Activated CD8-positive, alpha-beta T cell treated with anti-CD3 and anti-CD28 coated beads for 36 hours (primary cell): ENCODE measurements at regions of chr5 and their contacts with region 1.

Region 1: GRCh38 chr5:170183816-170184687 is 48.7 kb upstream of the C5orf58 start:
- DNase-seq: peak; percentile 66
- ATAC-seq: peak; percentile 72
- H3K4me3 Mint-ChIP-seq: no peak overlapping the region
- H3K27ac Mint-ChIP-seq: no peak overlapping the region
- H3K4me1 Mint-ChIP-seq: no peaks in the 10 kb centered on the region
- H3K27me3 Mint-ChIP-seq: no peaks in the 10 kb centered on the region
- CTCF ChIP-seq: peak; percentile 92

Region 2: DNA sequence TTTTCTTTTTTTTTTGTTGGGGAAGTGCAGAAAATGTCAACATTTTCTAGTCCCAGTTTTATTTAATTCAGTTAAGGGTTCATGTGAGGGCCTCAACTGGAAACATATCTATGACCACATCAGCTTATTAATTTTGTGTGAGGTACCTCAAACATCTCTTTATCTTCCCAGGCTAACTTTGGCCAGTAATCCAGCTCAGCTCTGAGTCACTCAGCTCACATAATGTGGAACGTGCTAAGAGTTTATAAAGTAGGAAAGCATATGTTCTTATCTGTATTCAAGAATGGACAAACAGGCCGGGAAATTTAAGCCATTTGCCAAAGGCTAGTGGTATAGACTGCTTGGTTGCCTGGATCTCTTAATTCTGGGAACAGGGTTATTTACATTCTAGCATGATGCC is 322.1 kb before region 1 on chr5:
- CTCF ChIA-PET with region 1: no interaction called
- POLR2A ChIA-PET with region 1: no interaction called
- intact Hi-C with region 1: no loop called
- DNase-seq: no peak
- ATAC-seq: no peak
- H3K4me3 Mint-ChIP-seq: no peak overlapping the region
- H3K27ac Mint-ChIP-seq: no peak overlapping the region
- H3K4me1 Mint-ChIP-seq: peaks cover 18% of the 10 kb centered on the region
- H3K27me3 Mint-ChIP-seq: no peaks in the 10 kb centered on the region
- CTCF ChIP-seq: no peak

Region 3: GRCh38 chr5:170070556-170071412 is 113.3 kb before region 1 on chr5:
- CTCF ChIA-PET with region 1: interaction called, 14 read pairs
- POLR2A ChIA-PET with region 1: no interaction called
- intact Hi-C with region 1: no loop called
- DNase-seq: peak; percentile 42
- ATAC-seq: no peak
- H3K4me3 Mint-ChIP-seq: no peak overlapping the region
- H3K27ac Mint-ChIP-seq: no peak overlapping the region
- H3K4me1 Mint-ChIP-seq: no peaks in the 10 kb centered on the region
- H3K27me3 Mint-ChIP-seq: no peaks in the 10 kb centered on the region
- CTCF ChIP-seq: peak; percentile 70

Region 4: DNA sequence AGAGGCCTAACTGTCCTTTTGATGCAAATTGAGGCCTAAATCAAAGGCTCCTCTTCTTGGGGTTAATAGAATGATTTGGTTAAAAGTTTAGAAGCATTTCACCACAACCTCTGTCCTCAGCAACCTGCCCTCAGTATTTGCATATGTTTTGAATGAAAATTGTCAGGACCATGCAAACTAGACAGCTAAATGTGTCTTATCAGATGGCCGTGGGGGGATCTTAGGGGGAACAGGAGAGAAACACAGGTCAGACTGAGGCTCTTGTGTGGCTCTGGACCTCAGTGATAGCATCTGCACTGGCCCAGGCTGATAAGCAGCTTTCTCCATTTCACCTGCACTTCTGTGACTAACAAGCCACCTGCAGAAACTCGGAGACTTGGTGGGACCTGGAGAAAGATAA is 29.3 kb before region 1 on chr5:
- CTCF ChIA-PET with region 1: interaction called, 13 read pairs
- POLR2A ChIA-PET with region 1: no interaction called
- intact Hi-C with region 1: no loop called
- DNase-seq: no peak
- ATAC-seq: no peak
- H3K4me3 Mint-ChIP-seq: no peak overlapping the region
- H3K27ac Mint-ChIP-seq: no peak overlapping the region
- H3K4me1 Mint-ChIP-seq: no peaks in the 10 kb centered on the region
- H3K27me3 Mint-ChIP-seq: no peaks in the 10 kb centered on the region
- CTCF ChIP-seq: no peak